Tibial artery (tissue), 4 donors: ENCODE measurements at regions of chr7 and their contacts with region 1.

Region 1: DNA sequence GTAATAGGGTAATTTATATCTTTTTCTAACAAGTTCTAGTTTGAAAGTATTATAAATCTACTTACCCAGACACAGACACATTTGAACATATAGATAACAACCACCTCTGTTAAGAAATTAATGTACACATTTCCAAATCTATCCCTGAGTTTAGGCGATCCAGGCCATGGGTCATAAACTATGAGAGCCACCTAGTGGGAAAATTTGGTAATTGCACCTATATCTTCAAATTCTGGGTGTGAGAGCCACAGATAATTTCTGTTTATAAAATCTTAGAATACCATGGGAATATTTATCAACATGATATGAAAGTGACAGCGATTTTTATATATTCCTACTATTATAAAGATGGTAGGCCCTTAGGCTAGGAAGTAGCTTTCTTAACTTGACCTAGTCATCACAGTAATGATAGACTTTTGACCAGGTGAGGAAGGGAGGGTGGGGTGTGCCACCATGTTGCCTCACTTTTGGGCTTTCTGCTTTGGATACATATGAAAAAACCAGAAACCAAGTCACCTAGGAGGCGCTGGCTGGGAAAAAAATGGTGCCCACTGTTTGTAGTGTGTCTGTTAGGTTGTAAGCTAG is 8.0 kb upstream of the EPHA1 start:
- DNase-seq: no peak
- H3K4me3 ChIP-seq: no peak overlapping the region
- H3K27ac ChIP-seq: no peak overlapping the region
- H3K4me1 ChIP-seq: peaks cover 0 to 6% (median 0%) of the 10 kb centered on the region in 4 donors
- H3K27me3 ChIP-seq: no peaks in the 10 kb centered on the region
- CTCF ChIP-seq: peak; percentile 74 to 75

Region 2: GRCh38 chr7:142983825-142984224 is 432.8 kb before region 1 on chr7:
- intact Hi-C with region 1: no loop called
- DNase-seq: no peak
- H3K4me3 ChIP-seq: no peak overlapping the region
- H3K27ac ChIP-seq: no peak overlapping the region
- H3K4me1 ChIP-seq: no peaks in the 10 kb centered on the region
- H3K27me3 ChIP-seq: peaks cover 0 to 6% of the 10 kb centered on the region in 2 donors
- CTCF ChIP-seq: no peak

Region 3: DNA sequence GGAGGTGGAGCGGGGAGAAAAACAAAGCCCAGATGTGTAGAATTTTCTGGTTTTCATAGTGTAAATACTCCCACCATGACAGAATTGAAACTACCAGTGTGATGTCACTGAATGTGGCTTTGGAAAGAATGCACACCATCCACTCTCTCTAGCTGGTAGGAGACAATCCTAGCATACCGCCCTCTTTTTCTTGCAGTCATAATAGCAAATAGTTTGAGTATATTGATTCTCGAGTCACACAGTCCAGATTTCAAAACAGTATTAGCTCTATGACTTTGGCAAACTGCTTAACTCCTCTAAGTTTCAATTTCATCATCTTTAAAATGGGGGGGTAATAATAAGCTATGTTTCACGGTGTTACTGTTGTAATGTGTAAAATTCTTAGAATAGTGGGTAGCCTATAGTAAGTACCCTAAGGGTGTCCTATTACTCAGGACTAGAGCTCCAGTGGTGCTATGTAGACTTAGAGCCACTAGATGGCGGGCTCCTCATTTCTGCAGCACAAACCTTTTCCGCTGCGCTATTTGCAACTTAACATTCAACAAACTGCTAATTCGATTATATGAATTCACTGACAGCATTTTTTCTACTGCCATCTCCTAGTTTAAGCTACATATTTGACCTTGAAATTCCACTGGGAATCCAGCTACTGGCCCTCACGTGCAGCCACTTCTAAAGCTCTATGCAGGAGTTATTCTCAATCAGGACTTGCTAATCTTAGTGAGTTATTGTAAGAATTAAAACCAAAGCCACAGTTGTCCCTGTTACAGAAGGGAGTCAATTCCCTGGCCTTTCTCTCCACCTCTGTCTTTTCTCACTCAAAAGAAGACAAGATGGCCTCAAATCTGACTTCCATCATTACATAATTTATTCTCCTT is 176.1 kb before region 1 on chr7:
- intact Hi-C with region 1: loop called (anchors 5 kb)
- DNase-seq: peak; percentile 76
- H3K4me3 ChIP-seq: no peak overlapping the region
- H3K27ac ChIP-seq: no peak overlapping the region
- H3K4me1 ChIP-seq: no peaks in the 10 kb centered on the region
- H3K27me3 ChIP-seq: peaks cover 0 to 9% of the 10 kb centered on the region in 2 donors
- CTCF ChIP-seq: peak; percentile 76 to 92

Region 4: DNA sequence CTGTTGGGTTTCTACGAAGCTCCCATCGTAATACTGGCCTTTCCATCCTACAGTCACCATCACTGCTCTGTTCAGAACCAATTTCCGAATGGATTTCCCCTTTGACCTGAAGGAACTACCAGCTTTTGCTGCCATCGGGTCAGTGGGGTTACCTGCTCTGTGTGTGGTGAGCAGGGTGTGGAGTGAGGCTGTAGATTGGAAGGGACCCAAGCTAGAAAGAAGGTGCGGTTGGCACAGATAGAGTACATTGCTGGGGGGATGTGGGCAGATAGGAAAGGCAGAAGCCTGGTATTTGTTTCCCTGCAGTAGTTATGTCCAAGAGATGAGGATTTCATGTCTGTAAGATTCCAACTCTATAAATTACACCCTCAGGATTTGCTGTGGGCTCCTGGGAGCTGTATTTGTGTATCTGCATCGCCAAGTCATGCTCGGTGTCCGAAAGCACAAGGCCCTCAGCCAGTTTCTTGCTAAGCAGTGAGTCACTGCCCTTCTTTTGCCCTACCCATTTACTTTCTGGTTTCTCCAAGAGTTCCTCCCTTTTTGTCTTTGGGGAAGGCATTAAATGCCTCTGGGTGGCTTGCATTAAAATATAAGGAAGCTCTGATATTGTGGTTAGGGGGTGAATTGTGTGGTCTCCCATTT is 85.4 kb before region 1 on chr7:
- intact Hi-C with region 1: no loop called
- DNase-seq: no peak
- H3K4me3 ChIP-seq: no peak overlapping the region
- H3K27ac ChIP-seq: no peak overlapping the region
- H3K4me1 ChIP-seq: no peaks in the 10 kb centered on the region
- H3K27me3 ChIP-seq: no peaks in the 10 kb centered on the region
- CTCF ChIP-seq: no peak

Region 5: DNA sequence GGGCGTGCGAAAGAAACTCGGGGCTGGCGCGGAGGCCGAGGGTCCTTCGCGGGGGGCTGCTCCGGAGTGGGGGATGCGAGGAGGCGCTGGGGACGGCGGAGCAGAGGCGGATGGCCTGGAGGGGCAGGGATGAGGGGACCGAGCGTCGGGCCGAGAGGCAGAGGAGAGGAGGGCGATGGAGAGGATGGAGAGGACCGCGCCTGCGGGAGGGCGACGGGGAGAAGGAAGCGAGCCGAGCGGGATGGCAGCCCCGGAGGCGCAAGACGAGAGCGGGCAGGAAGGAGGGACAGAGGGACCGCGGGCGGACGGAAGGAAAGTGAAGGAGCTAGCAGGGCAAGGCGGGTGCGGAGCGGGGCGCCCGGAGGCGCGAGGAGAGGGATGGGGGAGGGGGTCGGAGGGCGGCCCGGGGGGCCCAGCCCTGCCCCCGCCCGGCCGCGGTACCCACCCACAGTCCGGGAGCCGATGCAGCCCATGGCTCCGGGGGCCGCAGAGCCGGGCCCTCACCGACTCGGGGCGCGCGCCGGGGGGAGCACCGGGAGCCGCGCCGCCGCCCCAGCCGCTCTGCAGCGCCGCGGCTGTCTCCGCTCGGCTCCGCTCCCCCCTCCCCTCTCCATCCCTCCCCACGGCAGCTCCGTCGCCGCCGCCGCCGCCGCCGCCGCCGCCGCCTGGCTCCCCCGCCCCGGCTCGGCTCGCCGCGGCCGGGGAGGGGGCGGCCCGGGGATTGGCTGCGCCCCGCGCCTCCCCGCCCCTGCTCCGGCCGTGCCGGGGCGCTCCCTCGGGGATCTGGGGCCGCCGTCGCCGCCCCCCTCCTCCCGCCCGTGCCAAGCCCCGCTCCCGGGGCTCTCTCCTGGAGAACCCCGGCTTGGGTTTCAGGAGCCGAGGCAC is 54.3 kb before region 1 on chr7 and contains the start of gene FAM131B:
- intact Hi-C with region 1: loop called (anchors 10 kb)
- DNase-seq: no peak
- H3K4me3 ChIP-seq: peak within 1 kb of the TSS; percentile 56 to 62
- H3K27ac ChIP-seq: no peak within 1 kb of the TSS
- H3K4me1 ChIP-seq: peaks cover 0 to 18% (median 14%) of the 10 kb centered on the region in 4 donors
- H3K27me3 ChIP-seq: peaks cover 0 to 26% of the 10 kb centered on the region in 2 donors
- CTCF ChIP-seq: no peak

Region 6: DNA sequence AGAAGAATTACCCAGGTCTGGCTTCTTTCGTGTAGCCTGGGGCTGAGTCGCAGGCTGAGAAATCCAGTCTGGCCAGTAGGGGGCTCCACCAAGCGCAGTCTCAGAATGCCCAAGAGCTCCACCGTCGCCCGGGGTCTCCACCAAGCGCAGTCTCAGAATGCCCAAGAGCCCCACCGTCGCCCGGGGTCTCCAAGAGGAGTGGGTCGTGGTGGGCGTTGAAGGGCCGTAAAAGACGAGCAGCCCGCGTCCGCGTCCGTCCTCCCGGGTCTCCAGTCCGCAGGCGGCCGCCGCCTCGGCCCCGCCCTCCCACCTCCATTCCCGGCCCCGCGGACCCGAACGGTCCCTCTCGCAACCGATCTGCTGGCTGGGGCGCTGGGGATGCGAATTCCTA is 36.4 kb before region 1 on chr7:
- intact Hi-C with region 1: loop called (anchors 5 kb)
- DNase-seq: peak; percentile 86 to 94
- H3K4me3 ChIP-seq: peak overlapping the region; percentile 69 to 98
- H3K27ac ChIP-seq: peak overlapping the region; percentile 96 to 100
- H3K4me1 ChIP-seq: peaks cover 0 to 50% (median 42%) of the 10 kb centered on the region in 4 donors
- H3K27me3 ChIP-seq: no peaks in the 10 kb centered on the region
- CTCF ChIP-seq: peak; percentile 83 to 87

Region 7: DNA sequence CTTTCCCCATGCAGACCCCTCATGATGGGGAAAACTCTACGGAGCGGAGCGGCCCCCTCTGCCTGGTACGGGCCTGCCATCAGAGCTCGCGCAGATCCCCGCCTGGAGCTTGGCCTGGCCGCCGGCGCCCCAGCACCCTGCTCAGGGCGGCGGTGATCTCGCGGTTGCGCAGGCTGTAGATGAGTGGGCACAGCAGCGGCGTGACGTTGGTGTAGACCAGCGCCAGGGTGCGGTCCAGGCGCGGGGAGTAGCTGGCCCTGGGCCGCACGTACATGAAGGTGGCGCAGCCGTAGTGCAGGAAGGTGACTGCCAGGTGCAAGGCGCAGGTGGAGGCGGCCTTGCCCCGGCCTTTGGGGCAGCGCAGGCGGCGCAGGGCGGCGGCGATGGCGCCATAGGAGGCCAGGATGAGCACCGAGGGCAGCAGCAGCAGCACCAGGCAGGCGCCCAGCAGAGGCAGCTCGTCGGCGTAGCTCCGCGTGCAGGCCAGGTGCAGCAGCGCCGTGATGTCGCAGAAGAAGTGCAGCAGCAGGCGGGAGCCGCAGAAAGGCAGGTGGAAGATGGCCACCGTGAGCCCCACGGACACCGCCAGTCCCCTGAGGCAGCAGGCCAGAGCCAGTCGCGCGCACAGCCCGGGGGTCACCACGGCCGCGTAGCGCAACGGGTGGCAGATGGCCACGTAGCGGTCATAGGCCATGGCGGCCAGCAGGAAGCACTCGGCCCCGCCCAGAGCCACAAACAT is 94.4 kb after region 1 on chr7:
- intact Hi-C with region 1: no loop called
- DNase-seq: no peak
- H3K4me3 ChIP-seq: no peak overlapping the region
- H3K27ac ChIP-seq: no peak overlapping the region
- H3K4me1 ChIP-seq: no peaks in the 10 kb centered on the region
- H3K27me3 ChIP-seq: no peaks in the 10 kb centered on the region
- CTCF ChIP-seq: no peak